HCT116 (cell line): ENCODE measurements at regions of chr2 and their contacts with region 1.

Region 1: GRCh38 chr2:186780701-186781348 is 68.1 kb downstream of the ZSWIM2 start:
- DNase-seq: peak; percentile 48
- ATAC-seq: peak; percentile 100
- H3K4me3 ChIP-seq: no peak overlapping the region
- H3K27ac ChIP-seq: no peak overlapping the region
- H3K4me1 ChIP-seq: no peaks in the 10 kb centered on the region
- H3K27me3 ChIP-seq: no peaks in the 10 kb centered on the region
- CTCF ChIP-seq: peak; percentile 47 to 64 (median 58); a peak in 4 of 6 replicates
- POLR2A ChIP-seq: no peak
- RAD21 ChIP-seq: peak; percentile 89

Region 2: GRCh38 chr2:185208261-185208660 is 1572.6 kb before region 1 on chr2:
- CTCF ChIA-PET with region 1: no interaction called
- POLR2A ChIA-PET with region 1: no interaction called
- RAD21 ChIA-PET with region 1: no interaction called
- intact Hi-C with region 1: loop called (anchors 2 kb)
- DNase-seq: peak; percentile 45
- ATAC-seq: peak; percentile 95
- H3K4me3 ChIP-seq: no peak overlapping the region
- H3K27ac ChIP-seq: no peak overlapping the region
- H3K4me1 ChIP-seq: no peaks in the 10 kb centered on the region
- H3K27me3 ChIP-seq: no peaks in the 10 kb centered on the region
- CTCF ChIP-seq: peak; percentile 45 to 71 (median 68); a peak in 5 of 6 replicates
- POLR2A ChIP-seq: no peak
- RAD21 ChIP-seq: peak; percentile 80

Region 3: DNA sequence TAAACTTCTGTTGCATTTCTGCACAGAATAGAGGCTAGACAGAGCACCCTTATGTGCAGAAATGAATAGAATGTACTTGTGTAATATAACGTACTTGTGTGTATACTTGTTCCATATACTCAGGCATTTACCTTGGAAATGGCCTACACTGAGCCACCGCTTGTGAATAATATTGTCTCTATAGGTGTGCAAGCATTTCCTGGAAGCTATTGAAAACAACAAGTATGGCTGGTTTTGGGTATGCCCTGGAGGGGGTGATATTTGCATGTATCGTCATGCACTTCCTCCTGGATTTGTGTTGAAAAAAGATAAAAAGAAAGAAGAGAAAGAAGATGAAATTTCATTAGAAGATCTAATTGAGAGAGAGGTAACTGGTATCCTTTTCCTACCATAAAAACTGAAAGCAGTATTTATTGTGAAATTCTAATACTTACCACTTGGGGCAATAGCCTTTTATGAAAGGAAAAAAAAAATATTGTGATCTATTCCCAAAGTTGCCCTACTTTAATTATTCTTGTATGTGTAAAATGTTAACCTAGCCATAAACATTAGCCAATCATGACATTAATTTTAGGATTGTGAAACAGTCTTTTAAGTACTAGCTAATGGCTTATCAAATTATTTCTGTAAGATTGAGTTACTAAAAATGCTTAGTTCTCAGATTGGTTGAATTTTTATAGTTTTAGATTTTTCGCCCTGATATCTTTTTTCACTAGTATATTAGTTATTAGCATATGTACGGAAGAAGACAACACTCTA is 276.8 kb before region 1 on chr2:
- CTCF ChIA-PET with region 1: interaction called, 3 read pairs
- POLR2A ChIA-PET with region 1: no interaction called
- RAD21 ChIA-PET with region 1: no interaction called
- intact Hi-C with region 1: loop called (anchors 2 kb)
- DNase-seq: no peak
- ATAC-seq: peak; percentile 61
- H3K4me3 ChIP-seq: no peak overlapping the region
- H3K27ac ChIP-seq: no peak overlapping the region
- H3K4me1 ChIP-seq: no peaks in the 10 kb centered on the region
- H3K27me3 ChIP-seq: no peaks in the 10 kb centered on the region
- CTCF ChIP-seq: peak; percentile 32 to 60 (median 56); a peak in 4 of 6 replicates
- POLR2A ChIP-seq: no peak
- RAD21 ChIP-seq: peak; percentile 67

Region 4: GRCh38 chr2:186693446-186693832 is 87.4 kb before region 1 on chr2:
- CTCF ChIA-PET with region 1: no interaction called
- POLR2A ChIA-PET with region 1: no interaction called
- RAD21 ChIA-PET with region 1: no interaction called
- intact Hi-C with region 1: loop called (anchors 5 kb)
- DNase-seq: no peak
- ATAC-seq: peak; percentile 21; the same call in 1 of the 2 replicates
- H3K4me3 ChIP-seq: peak overlapping the region; percentile 73 to 85
- H3K27ac ChIP-seq: 0 out of 2 replicates have a peak overlapping the region, but pooled peaks have one; percentile 21
- H3K4me1 ChIP-seq: peaks cover 0 to 13% of the 10 kb centered on the region in 2 experiments; a peak in 3 of 4 replicates
- H3K27me3 ChIP-seq: no peaks in the 10 kb centered on the region
- CTCF ChIP-seq: no peak
- POLR2A ChIP-seq: no peak
- RAD21 ChIP-seq: no peak

Region 5: DNA sequence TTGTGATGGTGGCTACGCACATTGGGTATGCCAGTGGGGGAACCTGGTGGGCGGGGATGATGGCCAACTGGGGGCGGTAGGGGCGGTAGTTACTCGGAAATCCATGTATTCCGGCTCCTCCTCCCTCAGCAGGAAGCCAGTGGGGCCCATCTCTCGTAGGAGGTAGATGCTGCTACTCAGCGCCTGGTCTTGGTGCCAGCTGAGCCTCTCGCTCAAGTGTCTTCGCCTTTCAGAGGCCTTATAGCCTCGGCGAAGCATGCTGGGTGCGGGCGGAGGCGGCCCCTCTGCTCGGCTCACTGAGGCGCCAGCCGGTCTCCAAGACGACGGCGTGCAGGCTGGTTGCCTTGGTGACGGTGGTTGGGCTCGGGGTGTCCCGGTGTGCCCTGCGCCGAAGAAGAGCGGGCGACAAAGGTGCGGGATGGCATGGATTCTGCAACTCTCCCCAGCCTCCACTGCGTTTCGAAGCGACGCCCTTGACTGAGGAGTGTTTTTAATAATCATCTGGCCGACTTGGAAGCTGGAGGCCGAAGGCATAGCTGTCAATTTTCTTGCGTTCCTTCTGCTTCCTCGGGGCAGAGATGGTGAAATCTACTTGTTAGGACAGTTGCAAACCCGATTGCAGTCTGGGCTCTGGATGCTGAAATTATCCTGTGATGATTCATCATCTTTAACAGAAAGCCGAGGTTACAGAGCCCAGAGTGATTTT is 68.2 kb after region 1 on chr2 and contains the start of gene ZSWIM2:
- CTCF ChIA-PET with region 1: no interaction called
- POLR2A ChIA-PET with region 1: no interaction called
- RAD21 ChIA-PET with region 1: no interaction called
- intact Hi-C with region 1: no loop called
- DNase-seq: no peak
- ATAC-seq: no peak
- H3K4me3 ChIP-seq: no peak within 1 kb of the TSS
- H3K27ac ChIP-seq: no peak within 1 kb of the TSS
- H3K4me1 ChIP-seq: no peaks in the 10 kb centered on the region
- H3K27me3 ChIP-seq: no peaks in the 10 kb centered on the region
- CTCF ChIP-seq: no peak
- POLR2A ChIP-seq: no peak
- RAD21 ChIP-seq: no peak
- total RNA-seq, gene ZSWIM2: not detected